Prostate gland (tissue), 2 donors: ENCODE measurements at regions of chr17 and their contacts with region 1.

Region 1: GRCh38 chr17:57833179-57833939 is 16.5 kb downstream of the MRPS23 start:
- DNase-seq: peak; percentile 77
- H3K4me3 ChIP-seq: peak overlapping the region; percentile 19 to 30
- H3K27ac ChIP-seq: peak overlapping the region; percentile 83 to 84
- H3K4me1 ChIP-seq: peaks cover 7% of the 10 kb centered on the region
- H3K27me3 ChIP-seq: no peaks in the 10 kb centered on the region
- CTCF ChIP-seq: peak; percentile 85 to 93 (median 90)
- POLR2A ChIP-seq: no peak

Region 2: GRCh38 chr17:57121338-57122042 is 711.9 kb before region 1 on chr17:
- intact Hi-C with region 1: loop called (anchors 10 kb)
- DNase-seq: no peak
- H3K4me3 ChIP-seq: no peak overlapping the region
- H3K27ac ChIP-seq: peak overlapping the region in 1 of 2 donors; percentile 63
- H3K4me1 ChIP-seq: no peaks in the 10 kb centered on the region
- H3K27me3 ChIP-seq: no peaks in the 10 kb centered on the region
- CTCF ChIP-seq: peak in 2 of 4 experiments; percentile 46 to 52
- POLR2A ChIP-seq: no peak

Region 3: GRCh38 chr17:57243171-57243948 is 590.0 kb before region 1 on chr17:
- intact Hi-C with region 1: loop called (anchors 5 kb)
- DNase-seq: peak; percentile 61
- H3K4me3 ChIP-seq: no peak overlapping the region
- H3K27ac ChIP-seq: no peak overlapping the region
- H3K4me1 ChIP-seq: no peaks in the 10 kb centered on the region
- H3K27me3 ChIP-seq: no peaks in the 10 kb centered on the region
- CTCF ChIP-seq: peak; percentile 95 to 99 (median 98)
- POLR2A ChIP-seq: no peak

Region 4: DNA sequence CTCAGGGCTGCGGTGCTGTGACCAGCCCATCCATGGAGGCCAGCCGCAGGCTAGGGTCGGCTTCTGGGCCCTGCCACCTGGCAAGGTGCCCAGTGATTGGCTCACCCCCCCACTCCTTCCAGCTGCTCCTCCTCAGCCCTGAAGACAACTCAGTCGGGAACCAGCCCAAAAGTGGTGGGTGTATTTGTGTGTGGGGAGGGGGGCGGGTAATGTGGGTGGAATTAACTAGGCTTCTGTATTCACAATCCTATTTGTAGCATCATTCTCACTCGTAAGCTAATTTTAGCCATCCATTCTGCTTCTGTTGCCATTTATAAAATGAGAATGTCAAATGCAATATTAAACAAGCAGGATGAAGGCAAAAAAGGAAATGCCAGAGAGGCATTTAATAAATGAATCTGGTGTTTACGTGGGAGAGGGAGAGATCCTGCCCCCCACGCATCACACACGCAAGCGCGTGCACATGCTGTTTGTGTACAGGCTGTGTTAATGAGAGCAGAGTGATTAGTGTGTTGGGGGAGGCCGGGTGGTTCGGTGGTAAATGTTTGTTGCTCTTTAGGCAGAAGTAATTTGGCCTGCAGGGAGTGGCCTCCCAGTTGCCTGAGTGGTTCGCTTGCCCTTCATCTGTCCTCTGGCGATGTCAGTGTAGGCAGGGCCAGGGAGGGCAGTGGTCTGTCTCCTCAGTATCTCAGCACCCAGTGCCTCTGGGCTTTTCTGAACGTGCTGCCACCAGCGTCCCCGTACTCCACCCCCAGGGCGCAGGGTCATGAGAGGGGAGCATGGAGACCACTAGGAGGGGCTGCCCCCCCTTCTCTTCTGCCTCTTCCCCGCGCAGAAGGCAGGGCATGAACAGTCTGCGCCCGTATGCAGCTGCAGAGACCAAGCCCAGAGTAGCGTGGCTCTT is 228.3 kb before region 1 on chr17:
- intact Hi-C with region 1: loop called (anchors 10 kb)
- DNase-seq: no peak
- H3K4me3 ChIP-seq: no peak overlapping the region
- H3K27ac ChIP-seq: peak overlapping the region; percentile 32 to 46
- H3K4me1 ChIP-seq: peaks cover 16% of the 10 kb centered on the region
- H3K27me3 ChIP-seq: no peaks in the 10 kb centered on the region
- CTCF ChIP-seq: no peak
- POLR2A ChIP-seq: no peak

Region 5: GRCh38 chr17:57671667-57672632 is 161.4 kb before region 1 on chr17:
- intact Hi-C with region 1: loop called (anchors 10 kb)
- DNase-seq: peak; percentile 70
- H3K4me3 ChIP-seq: no peak overlapping the region
- H3K27ac ChIP-seq: peak overlapping the region; percentile 2 to 14
- H3K4me1 ChIP-seq: no peaks in the 10 kb centered on the region
- H3K27me3 ChIP-seq: no peaks in the 10 kb centered on the region
- CTCF ChIP-seq: peak; percentile 87 to 92 (median 89)
- POLR2A ChIP-seq: no peak

Region 6: GRCh38 chr17:57810721-57811637 is 22.4 kb before region 1 on chr17:
- intact Hi-C with region 1: loop called (anchors 2 kb)
- DNase-seq: peak; percentile 28
- H3K4me3 ChIP-seq: peak overlapping the region; percentile 18 to 24
- H3K27ac ChIP-seq: peak overlapping the region; percentile 32 to 76
- H3K4me1 ChIP-seq: peaks cover 5% of the 10 kb centered on the region
- H3K27me3 ChIP-seq: no peaks in the 10 kb centered on the region
- CTCF ChIP-seq: peak in 1 of 4 experiments; percentile 4
- POLR2A ChIP-seq: no peak

Region 7: DNA sequence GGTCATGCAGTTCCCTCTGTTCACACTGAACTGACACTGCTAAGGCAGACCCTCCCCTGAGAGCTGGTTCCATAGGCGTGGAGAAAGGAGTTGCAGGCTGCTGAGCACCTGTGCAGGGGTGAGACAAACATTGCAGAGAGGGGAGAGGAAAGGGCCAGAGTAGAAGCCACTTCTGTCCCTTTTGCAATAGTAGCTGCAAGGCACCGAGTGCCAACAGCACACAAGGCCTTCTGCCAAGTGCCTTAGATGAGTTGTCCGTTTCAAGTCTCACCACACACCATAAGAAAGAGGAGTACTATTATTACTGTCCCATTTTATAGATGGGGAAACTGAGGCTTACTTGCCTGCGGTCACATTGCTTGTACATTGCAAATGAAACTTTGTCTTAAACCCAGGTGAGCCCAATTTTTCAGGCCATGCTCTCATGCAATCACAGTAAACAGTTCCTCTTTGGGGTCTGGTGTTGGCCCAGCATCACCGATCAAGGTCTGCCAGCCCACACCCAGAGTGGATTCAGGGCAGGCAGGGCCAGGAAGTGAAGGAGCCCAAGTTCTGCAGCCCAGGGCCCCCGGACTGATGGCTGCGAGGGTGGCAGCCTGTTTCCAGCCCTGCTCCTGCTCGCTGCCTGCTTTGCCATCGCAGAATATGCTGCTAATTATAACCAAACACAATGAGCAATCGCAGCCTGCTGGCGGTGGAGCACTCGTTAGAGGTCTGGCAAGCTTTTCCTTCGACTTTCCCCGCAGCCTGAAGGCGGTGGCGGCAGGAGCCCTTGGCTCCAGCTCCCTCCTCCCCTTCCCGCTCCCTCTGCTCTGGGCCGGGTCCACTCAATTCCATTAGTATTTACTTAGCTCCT is 213.1 kb after region 1 on chr17:
- intact Hi-C with region 1: no loop called
- DNase-seq: no peak
- H3K4me3 ChIP-seq: no peak overlapping the region
- H3K27ac ChIP-seq: no peak overlapping the region
- H3K4me1 ChIP-seq: no peaks in the 10 kb centered on the region
- H3K27me3 ChIP-seq: no peaks in the 10 kb centered on the region
- CTCF ChIP-seq: no peak
- POLR2A ChIP-seq: no peak